Head of caudate nucleus (tissue), 42 donors: ENCODE measurements at regions of chrX and their contacts with region 1.

Region 1: GRCh38 chrX:130401415-130402207 is at the start of gene RBMX2:
- DNase-seq: peak; percentile 45 to 89 (median 75)

Region 2: DNA sequence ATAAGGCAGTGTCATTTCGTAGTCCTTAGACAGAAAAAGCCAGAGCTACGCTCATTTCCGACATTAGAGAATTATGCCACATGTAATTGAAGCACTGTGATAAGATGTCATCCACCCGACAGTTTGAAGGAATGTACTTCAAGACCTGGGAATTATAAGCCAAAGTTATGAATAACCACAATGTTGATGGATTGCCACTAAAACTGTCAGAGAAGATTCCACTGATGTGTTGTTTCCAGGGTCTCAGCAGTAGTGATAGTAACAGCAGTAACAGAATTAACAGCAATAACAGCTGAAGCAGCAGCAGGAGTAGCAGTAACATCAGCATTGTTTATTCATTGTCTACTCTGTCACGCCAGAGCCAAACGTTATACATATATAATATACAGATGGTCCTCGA is 205.1 kb before region 1 on chrX:
- intact Hi-C with region 1: no loop called
- DNase-seq: no peak

Region 3: GRCh38 chrX:130902783-130903613 is 501.4 kb after region 1 on chrX and contains the start of gene ENOX2:
- intact Hi-C with region 1: loop called (anchors 5 kb)
- DNase-seq: peak; percentile 83 to 98 (median 95)